Natural killer cell (primary cell): ENCODE measurements at regions of chr1 and their contacts with region 1.

Region 1: GRCh38 chr1:171984850-171985485 is 143.7 kb downstream of the DNM3 start:
- DNase-seq: peak in 1 of 2 donors; percentile 61
- ATAC-seq: peak in 2 of 3 donors; percentile 47 to 60
- H3K4me3 ChIP-seq: no peak overlapping the region
- H3K4me3 Mint-ChIP-seq: no peak overlapping the region
- H3K27ac ChIP-seq: no peak overlapping the region
- H3K27ac Mint-ChIP-seq: no peak overlapping the region
- H3K4me1 ChIP-seq: no peaks in the 10 kb centered on the region
- H3K4me1 Mint-ChIP-seq: no peaks in the 10 kb centered on the region
- H3K27me3 ChIP-seq: no peaks in the 10 kb centered on the region
- H3K27me3 Mint-ChIP-seq: peaks cover 0 to 5% of the 10 kb centered on the region in 2 donors
- CTCF ChIP-seq: peak; percentile 79

Region 2: GRCh38 chr1:171654942-171655745 is 329.8 kb before region 1 on chr1:
- intact Hi-C with region 1: loop called (anchors 5 kb)
- DNase-seq: peak; percentile 59 to 69
- ATAC-seq: peak; percentile 68 to 85 (median 69)
- H3K4me3 ChIP-seq: no peak overlapping the region
- H3K4me3 Mint-ChIP-seq: peak overlapping the region; percentile 17
- H3K27ac ChIP-seq: no peak overlapping the region
- H3K27ac Mint-ChIP-seq: no peak overlapping the region
- H3K4me1 ChIP-seq: peaks cover 7% of the 10 kb centered on the region
- H3K4me1 Mint-ChIP-seq: peaks cover 0 to 11% of the 10 kb centered on the region in 2 donors
- H3K27me3 ChIP-seq: no peaks in the 10 kb centered on the region
- H3K27me3 Mint-ChIP-seq: peaks cover 37 to 61% of the 10 kb centered on the region in 2 donors
- CTCF ChIP-seq: peak; percentile 47